Activated CD4-positive, alpha-beta memory T cell treated with anti-CD3 and anti-CD28 coated beads for 36 hours (primary cell): ENCODE measurements at regions of chr9 and their contacts with region 1.

Region 1: GRCh38 chr9:5437254-5438216 is at the start of gene PLGRKT:
- DNase-seq: peak; percentile 95
- H3K4me3 Mint-ChIP-seq: peak within 1 kb of the TSS; percentile 97
- H3K27ac Mint-ChIP-seq: peak within 1 kb of the TSS; percentile 98
- H3K4me1 Mint-ChIP-seq: peaks cover 59% of the 10 kb centered on the region
- H3K27me3 Mint-ChIP-seq: no peaks in the 10 kb centered on the region
- total RNA-seq, gene PLGRKT: 52.9 to 59.4 TPM

Region 2: DNA sequence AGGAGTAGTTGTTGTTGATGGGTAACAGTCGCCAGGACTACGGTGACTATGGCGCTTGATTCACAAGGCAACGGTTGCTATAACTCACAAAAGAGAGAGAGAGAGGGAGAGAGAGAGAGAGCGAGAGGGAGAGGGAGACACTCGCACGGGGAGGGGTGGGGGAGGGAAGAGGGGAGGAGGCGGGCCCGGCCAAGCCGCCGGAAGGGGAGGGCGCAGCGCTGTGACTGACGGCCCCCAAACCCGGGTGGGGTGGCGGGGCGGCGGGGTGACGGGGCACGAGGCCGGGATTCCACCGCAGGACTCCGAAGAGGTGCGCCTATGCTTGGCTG is 1911.7 kb before region 1 on chr9 and contains the start of gene RFX3:
- CTCF ChIA-PET with region 1: no interaction called
- POLR2A ChIA-PET with region 1: no interaction called
- intact Hi-C with region 1: loop called (anchors 5 kb)
- DNase-seq: peak; percentile 95
- H3K4me3 Mint-ChIP-seq: peak within 1 kb of the TSS; percentile 99
- H3K27ac Mint-ChIP-seq: peak within 1 kb of the TSS; percentile 99
- H3K4me1 Mint-ChIP-seq: peaks cover 42% of the 10 kb centered on the region
- H3K27me3 Mint-ChIP-seq: no peaks in the 10 kb centered on the region
- total RNA-seq, gene RFX3: 12.2 to 13.4 TPM

Region 3: GRCh38 chr9:4762108-4762885 is 675.2 kb before region 1 on chr9:
- CTCF ChIA-PET with region 1: interaction called, 9 read pairs
- POLR2A ChIA-PET with region 1: interaction called, 3 read pairs
- intact Hi-C with region 1: loop called (anchors 5 kb)
- DNase-seq: peak; percentile 88
- H3K4me3 Mint-ChIP-seq: peak overlapping the region; percentile 17
- H3K27ac Mint-ChIP-seq: peak overlapping the region; percentile 42
- H3K4me1 Mint-ChIP-seq: peaks cover 11% of the 10 kb centered on the region
- H3K27me3 Mint-ChIP-seq: peaks cover 3% of the 10 kb centered on the region

Region 4: DNA sequence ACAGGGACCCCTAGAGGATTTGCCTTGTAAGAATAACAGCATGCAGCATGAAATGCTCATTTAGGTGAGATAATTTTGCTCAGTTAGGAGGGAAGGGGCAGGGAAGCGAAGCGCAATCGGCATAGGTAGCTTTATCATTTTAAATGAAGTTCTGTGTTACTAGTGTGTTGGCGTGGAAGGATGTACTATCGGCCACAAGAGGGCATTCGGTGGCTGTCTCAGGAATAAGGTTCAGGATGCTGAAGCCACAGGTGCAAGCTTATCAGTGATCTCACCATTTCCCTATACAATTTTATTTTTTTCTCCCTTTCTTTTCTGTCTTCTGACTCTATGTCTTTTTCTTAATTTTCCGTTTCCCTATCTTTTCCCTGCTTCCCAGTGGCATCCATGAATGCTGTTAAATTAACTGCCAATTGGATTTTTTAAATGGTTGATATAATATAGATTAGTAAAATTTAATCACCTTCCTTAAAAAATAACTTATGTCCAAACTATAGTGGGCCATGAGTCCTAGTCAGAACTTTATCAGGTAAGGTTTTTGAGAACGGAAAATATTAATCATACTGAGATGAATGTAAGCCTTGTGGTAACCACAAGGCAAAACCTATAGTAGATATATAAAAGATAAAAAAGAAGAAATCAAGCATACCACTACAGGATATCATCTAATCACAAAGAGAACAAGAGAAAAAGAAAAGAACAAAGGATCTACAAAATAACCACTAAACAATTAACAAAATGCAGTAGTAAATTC is 250.9 kb before region 1 on chr9:
- CTCF ChIA-PET with region 1: interaction called, 26 read pairs
- POLR2A ChIA-PET with region 1: no interaction called
- intact Hi-C with region 1: loop called (anchors 1 kb)
- DNase-seq: peak; percentile 74
- H3K4me3 Mint-ChIP-seq: no peak overlapping the region
- H3K27ac Mint-ChIP-seq: no peak overlapping the region
- H3K4me1 Mint-ChIP-seq: peaks cover 15% of the 10 kb centered on the region
- H3K27me3 Mint-ChIP-seq: no peaks in the 10 kb centered on the region

Region 5: DNA sequence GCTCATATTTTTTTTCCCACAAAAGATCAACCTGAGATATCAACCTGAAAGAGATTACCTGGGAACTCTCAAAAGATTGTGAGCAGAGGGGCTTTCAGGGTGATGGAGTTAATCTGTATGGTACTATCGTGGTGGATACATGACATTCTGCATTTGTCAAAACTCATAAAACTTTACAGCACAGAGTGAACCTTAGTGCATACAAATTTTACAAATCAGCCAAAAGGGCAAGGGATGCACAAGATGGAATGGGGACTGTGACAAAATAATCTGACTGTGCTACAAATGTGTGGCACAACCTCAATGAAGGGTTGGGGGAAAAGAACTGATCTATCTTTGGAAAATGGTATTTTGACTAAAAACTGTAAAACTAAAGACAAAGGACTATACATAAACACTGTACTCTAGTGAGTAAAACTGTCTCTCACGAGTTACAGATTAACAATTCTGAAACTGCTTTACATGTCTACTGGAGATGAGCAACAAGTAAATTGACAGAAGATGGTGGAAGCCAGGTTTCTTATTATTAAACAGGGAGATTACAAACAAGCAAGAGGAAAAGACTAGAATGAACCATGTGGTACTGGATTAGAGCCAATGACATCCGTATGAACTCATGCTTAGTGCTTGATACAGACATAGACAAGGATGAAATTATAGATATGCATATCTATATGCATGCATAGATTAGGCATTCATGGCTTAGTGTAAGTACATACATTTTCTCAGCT is 73.1 kb before region 1 on chr9:
- CTCF ChIA-PET with region 1: no interaction called
- POLR2A ChIA-PET with region 1: no interaction called
- intact Hi-C with region 1: loop called (anchors 1 kb)
- DNase-seq: no peak
- H3K4me3 Mint-ChIP-seq: no peak overlapping the region
- H3K27ac Mint-ChIP-seq: peak overlapping the region; percentile 59
- H3K4me1 Mint-ChIP-seq: peaks cover 21% of the 10 kb centered on the region
- H3K27me3 Mint-ChIP-seq: no peaks in the 10 kb centered on the region

Region 6: GRCh38 chr9:5459289-5459829 is 21.8 kb after region 1 on chr9:
- CTCF ChIA-PET with region 1: interaction called, 5 read pairs
- POLR2A ChIA-PET with region 1: interaction called, 9 read pairs
- intact Hi-C with region 1: loop called (anchors 1 kb)
- DNase-seq: peak; percentile 57
- H3K4me3 Mint-ChIP-seq: peak overlapping the region; percentile 68
- H3K27ac Mint-ChIP-seq: peak overlapping the region; percentile 87
- H3K4me1 Mint-ChIP-seq: peaks cover 73% of the 10 kb centered on the region
- H3K27me3 Mint-ChIP-seq: no peaks in the 10 kb centered on the region

Region 7: GRCh38 chr9:5628530-5629311 is 191.2 kb after region 1 on chr9 and contains the start of gene RIC1:
- CTCF ChIA-PET with region 1: interaction called, 3 read pairs
- POLR2A ChIA-PET with region 1: interaction called, 16 read pairs
- intact Hi-C with region 1: loop called (anchors 1 kb)
- DNase-seq: peak; percentile 94
- H3K4me3 Mint-ChIP-seq: peak within 1 kb of the TSS; percentile 98
- H3K27ac Mint-ChIP-seq: peak within 1 kb of the TSS; percentile 100
- H3K4me1 Mint-ChIP-seq: peaks cover 62% of the 10 kb centered on the region
- H3K27me3 Mint-ChIP-seq: no peaks in the 10 kb centered on the region
- total RNA-seq, gene RIC1: 14.1 to 15.0 TPM

Region 8: GRCh38 chr9:5749306-5749705 is 311.8 kb after region 1 on chr9:
- CTCF ChIA-PET with region 1: no interaction called
- POLR2A ChIA-PET with region 1: no interaction called
- intact Hi-C with region 1: no loop called
- DNase-seq: no peak
- H3K4me3 Mint-ChIP-seq: no peak overlapping the region
- H3K27ac Mint-ChIP-seq: no peak overlapping the region
- H3K4me1 Mint-ChIP-seq: peaks cover 13% of the 10 kb centered on the region
- H3K27me3 Mint-ChIP-seq: no peaks in the 10 kb centered on the region